Ovary (tissue), 10 donors: ENCODE measurements at regions of chr3 and their contacts with region 1.

Region 1: GRCh38 chr3:121663171-121663847 is 2.6 kb upstream of the HCLS1 start:
- DNase-seq: no peak
- H3K4me3 ChIP-seq: no peak overlapping the region
- H3K27ac ChIP-seq: no peak overlapping the region
- H3K4me1 ChIP-seq: peaks cover 1% of the 10 kb centered on the region
- H3K27me3 ChIP-seq: no peaks in the 10 kb centered on the region
- CTCF ChIP-seq: no peak
- EP300 ChIP-seq: no peak
- POLR2A ChIP-seq: no peak

Region 2: DNA sequence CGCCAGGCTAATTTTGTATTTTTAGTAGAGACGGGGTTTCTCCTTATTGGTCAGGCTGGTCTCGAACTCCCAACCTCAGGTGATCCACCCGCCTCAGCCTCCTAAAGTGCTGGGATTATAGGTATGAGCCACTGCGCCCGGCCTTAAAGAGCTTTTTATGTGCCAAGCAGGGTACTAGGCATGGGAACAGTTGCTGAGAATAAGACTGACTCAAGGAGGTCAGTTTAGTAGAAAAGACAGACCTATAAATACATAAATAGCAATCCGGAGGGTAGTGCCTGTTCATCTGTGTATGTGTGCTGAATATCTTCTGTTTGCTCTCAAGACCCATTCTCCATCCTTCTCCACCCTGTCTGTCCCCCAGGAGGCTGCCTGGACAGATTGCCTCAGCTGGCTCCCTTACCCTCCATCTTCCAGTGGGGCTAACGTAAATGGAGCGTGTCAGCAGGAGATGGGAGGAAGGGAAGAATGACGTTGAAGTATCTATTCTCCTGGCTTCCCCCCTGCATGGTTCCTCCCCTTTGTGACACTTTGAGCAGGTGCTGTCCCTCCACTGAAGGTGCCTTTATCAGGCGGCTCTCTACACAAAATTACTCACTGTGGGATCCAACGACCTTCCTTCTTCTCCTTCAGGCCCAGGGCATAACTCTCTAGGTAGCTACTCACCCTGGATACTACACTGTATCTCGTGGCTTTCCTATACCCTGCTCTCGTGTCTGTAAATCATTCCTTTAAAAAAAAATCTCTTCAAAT is 39.0 kb before region 1 on chr3:
- intact Hi-C with region 1: loop called in 1 of 4 experiments (anchors 1 kb)
- DNase-seq: no peak
- H3K4me3 ChIP-seq: no peak overlapping the region
- H3K27ac ChIP-seq: no peak overlapping the region
- H3K4me1 ChIP-seq: no peaks in the 10 kb centered on the region
- H3K27me3 ChIP-seq: no peaks in the 10 kb centered on the region
- CTCF ChIP-seq: no peak
- EP300 ChIP-seq: no peak
- POLR2A ChIP-seq: no peak

Region 3: GRCh38 chr3:121681792-121682191 is 18.5 kb after region 1 on chr3:
- intact Hi-C with region 1: no loop called
- DNase-seq: no peak
- H3K4me3 ChIP-seq: no peak overlapping the region
- H3K27ac ChIP-seq: no peak overlapping the region
- H3K4me1 ChIP-seq: no peaks in the 10 kb centered on the region
- H3K27me3 ChIP-seq: no peaks in the 10 kb centered on the region
- CTCF ChIP-seq: no peak
- EP300 ChIP-seq: no peak
- POLR2A ChIP-seq: no peak